ENCODE measurements at regions of chr1 and their contacts with region 1.

Region 1: GRCh38 chr1:26993237-26994019 is at the start of gene TRNP1:
- DNase-seq: peak; percentile 58 to 79
- H3K4me3 ChIP-seq: peak within 1 kb of the TSS; percentile 66 to 91
- H3K27ac ChIP-seq: peak within 1 kb of the TSS; percentile 67 to 70
- H3K4me1 ChIP-seq: peaks cover 0 to 52% (median 34%) of the 10 kb centered on the region in 4 donors
- H3K27me3 ChIP-seq: peaks cover 0 to 24% of the 10 kb centered on the region in 2 donors
- CTCF ChIP-seq: no peak

Region 2: DNA sequence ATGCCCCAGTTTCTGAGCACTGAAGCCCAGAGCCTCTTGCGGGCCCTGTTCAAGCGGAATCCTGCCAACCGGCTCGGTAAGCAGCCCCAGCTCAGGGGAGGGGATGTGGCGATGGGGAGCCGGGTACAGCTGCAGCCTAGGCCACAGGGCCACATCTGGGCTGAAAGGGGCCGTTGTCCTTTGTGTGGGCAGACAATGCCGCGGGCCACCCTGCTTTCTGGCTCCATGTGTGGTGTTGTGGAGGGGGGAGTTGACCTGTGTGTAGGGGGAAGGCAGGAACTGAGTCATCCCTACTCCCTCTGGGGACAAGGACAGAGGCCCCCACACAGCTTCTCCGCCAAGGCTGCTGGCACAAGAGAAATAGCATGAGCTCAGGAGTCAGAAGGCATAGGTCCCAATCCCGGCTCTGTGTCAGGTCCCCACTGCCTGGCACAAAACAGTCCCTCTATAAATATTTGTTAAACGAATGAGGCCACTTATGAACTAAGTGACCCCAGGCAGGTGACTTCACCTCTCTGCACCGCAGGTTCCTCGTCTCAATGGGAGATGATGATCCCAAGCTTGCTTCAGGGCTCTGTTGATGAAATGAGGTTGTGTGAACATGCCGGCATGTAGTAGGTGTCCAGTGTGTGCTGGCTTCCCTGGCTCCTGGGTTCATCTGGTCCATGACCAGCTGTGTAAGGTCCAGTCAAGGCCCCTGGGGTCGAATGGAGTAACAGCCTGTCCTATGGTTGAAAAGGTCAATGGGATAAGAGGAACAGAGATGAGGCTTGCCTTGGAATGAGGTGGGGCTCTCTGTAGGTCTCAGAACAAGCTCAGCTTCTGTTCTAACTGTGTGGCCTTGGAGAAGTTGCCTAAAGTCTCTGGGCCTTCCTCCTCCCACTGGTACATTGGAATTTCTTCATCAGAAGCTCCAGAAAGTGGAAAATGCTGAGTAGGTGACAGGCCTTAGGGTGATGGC is 437.6 kb before region 1 on chr1:
- intact Hi-C with region 1: no loop called
- DNase-seq: no peak
- H3K4me3 ChIP-seq: no peak overlapping the region
- H3K27ac ChIP-seq: no peak overlapping the region
- H3K4me1 ChIP-seq: peaks cover 0 to 3% (median 0%) of the 10 kb centered on the region in 4 donors
- H3K27me3 ChIP-seq: peaks cover 0 to 10% of the 10 kb centered on the region in 2 donors
- CTCF ChIP-seq: no peak

Region 3: DNA sequence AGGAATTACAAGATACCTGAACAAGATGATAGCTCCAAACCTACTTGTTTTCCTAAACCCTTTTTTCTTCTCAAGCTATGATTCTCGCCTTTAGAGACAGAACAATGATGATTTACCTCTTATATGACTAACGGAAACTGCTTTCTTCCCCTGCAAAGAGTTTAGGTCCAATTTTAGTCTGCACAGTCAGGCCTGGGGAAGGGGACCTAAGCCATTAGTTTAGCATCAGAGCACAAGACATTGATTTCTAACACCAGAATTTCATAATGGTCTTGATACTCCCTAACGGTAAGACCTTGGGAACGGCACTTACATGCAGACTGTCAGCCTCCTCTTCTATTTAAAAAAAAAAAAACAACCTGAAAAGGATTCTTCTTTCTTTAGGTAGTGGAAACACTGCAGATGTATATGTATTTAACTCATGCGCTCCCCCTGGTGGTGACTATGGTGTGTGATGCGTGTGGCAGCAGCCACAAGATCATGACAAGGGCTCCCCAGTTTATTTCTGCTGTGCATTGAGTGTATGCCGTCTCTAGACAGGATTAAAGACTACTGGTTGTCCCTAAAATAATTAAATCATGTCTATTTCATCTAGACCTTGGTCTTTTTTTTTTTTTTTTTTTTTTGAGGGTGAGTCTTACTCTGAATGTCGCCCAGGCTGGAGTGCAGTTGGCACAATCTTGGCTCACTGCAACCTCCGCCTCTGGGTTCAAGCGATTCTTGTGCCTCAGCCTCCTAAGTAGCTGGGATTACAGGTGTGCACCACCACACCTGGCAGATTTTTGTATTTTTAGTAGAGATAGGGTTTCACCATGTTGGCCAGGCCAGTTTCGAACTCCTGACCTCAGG is 291.2 kb after region 1 on chr1:
- intact Hi-C with region 1: loop called (anchors 5 kb)
- DNase-seq: peak; percentile 82 to 94
- H3K4me3 ChIP-seq: no peak overlapping the region
- H3K27ac ChIP-seq: no peak overlapping the region
- H3K4me1 ChIP-seq: no peaks in the 10 kb centered on the region
- H3K27me3 ChIP-seq: no peaks in the 10 kb centered on the region
- CTCF ChIP-seq: peak; percentile 73 to 79

Region 4: DNA sequence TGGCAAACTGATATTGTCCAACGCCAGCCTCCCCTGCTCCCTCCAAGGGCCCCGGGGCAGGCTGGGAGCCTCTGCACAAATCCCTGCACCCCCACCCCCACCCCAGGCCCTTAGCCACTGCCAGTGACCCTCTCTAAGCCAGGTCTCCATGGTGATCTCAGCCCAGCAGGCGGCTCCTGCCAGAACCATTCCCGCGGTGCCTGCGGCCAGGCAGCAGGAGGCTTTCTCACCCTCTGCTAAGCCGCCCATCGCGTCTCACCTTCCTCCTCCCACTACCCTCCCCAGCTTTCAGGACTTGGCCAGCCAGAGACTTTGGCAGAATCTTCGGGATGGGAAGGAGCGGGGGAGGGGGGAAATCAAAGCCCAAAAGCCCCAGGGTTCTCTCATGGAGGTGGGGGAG is 543.3 kb after region 1 on chr1:
- intact Hi-C with region 1: no loop called
- DNase-seq: peak; percentile 57 to 87
- H3K4me3 ChIP-seq: peak overlapping the region in 1 of 2 donors; percentile 15
- H3K27ac ChIP-seq: peak overlapping the region; percentile 76 to 82
- H3K4me1 ChIP-seq: peaks cover 4 to 68% (median 53%) of the 10 kb centered on the region in 4 donors
- H3K27me3 ChIP-seq: no peaks in the 10 kb centered on the region
- CTCF ChIP-seq: peak in 1 of 2 experiments; percentile 8